ENCODE measurements at regions of chr17 and their contacts with region 1.

Region 1: DNA sequence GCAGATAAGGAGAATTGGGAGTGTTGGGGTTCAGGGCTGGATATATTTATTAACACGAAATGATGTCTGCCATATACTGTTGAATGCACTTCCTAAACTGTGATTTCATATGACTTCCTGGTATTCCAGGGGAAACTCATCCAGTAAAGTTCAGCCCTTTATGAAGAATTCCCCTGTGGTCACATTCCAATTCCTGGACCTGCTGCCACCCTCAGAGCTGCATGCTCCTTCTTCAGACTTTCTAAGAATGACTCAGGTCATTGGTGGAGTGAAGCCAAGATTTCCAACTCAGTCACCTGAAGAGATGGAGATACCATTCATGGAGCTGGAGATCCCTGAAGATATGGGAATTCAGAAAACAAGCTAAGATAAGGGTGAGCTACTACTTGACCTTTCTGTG is 114.2 kb upstream of the TMEM97 start:
- DNase-seq: no peak

Region 2: DNA sequence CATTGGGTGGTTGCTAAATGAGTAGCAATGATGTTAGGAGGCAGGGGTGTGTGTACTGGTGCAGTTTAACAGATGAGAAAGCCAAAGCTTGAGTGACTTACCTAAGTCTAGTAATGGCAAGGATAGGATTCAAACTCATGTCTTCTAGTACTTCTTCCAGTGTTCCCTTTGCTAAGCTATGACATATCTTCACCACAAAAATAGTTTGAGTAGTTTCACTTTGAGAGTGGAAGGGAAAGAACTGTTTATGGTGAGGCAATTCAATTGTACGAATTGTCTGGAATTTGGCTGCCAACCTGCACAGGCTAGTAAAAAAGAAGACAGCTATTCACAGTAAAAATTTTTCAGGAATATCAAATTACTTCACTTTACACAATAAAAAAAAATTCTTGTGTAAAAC is 24.3 kb before region 1 on chr17:
- intact Hi-C with region 1: loop called in 1 of 2 experiments (anchors 1 kb)
- DNase-seq: no peak

Region 3: DNA sequence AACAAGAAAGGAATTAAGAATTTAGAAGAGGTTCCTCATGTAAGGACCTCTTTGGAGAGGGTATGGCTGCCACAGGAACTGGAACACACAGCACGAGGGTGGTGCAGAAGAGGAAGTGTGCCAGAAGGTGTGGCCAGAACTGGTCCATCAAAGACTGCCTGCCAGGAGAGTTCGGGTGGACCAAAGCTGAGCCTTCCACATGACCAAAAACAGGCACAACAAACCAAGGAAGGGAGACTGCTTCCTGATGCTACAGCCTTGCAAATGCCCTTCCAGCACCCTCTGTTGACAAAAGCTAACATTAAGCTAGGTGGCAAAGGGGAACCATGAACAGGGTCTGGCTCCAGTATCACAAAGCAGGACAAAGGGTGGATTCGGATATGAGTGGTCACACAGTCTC is 11.5 kb before region 1 on chr17:
- intact Hi-C with region 1: no loop called
- DNase-seq: no peak

Measured in posterior vena cava (tissue), 2 donors.